SK-N-SH (cell line): ENCODE measurements at regions of chr19 and their contacts with region 1.

Region 1: DNA sequence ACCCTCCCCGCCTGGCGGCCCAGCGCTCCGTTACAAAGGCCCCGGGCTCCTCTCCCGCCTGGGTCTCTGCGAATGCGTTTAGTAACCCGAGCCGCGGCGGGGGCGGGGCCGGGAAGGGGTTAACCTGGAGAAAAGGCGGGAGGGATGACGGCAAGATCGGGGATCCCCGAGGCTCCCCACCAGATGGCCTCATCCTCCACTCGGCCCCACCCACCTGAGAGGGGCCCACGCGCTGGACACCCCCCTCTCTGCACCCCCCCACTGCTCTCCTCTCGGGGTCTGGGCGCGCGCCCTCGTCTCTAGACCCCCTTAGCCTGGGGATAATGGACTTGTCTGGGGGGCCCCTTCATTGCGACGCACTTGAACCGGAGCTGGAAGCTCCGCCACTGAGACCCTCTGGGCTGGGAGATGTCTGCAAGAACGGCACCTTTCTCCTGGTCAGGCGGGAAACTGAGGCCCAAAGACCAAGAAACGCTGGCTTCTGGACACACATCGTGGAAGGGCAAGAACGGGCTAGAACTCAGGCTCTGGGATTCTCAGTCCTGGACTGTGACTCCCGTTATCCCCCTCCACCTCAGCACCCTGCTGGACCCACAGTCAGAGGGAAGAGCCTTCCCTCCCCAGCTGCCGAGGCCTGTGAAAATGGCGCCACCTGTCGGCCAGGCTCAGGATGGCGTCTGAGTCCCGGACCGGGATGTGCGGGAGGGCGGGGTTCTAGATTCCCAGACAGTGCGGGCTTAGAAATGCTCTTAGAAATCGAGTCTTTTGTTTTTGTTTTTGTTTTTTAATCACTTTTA is 2.9 kb upstream of the LTBP4 start:
- DNase-seq: peak; percentile 94
- H3K4me3 ChIP-seq: peak overlapping the region; percentile 39 to 62
- H3K27ac ChIP-seq: peak overlapping the region in 1 of 2 experiments; percentile 38; a peak in 2 of 4 replicates
- H3K4me1 ChIP-seq: peaks cover 0 to 30% of the 10 kb centered on the region in 2 experiments; a peak in 2 of 4 replicates
- H3K27me3 ChIP-seq: no peaks in the 10 kb centered on the region
- CTCF ChIP-seq: peak; percentile 97
- EP300 ChIP-seq: no peak
- RAD21 ChIP-seq: peak; percentile 95

Region 2: GRCh38 chr19:40465557-40466150 is 132.7 kb before region 1 on chr19 and contains the start of gene BLVRB:
- CTCF ChIA-PET with region 1: interaction called, 25 read pairs
- POLR2A ChIA-PET with region 1: no interaction called
- DNase-seq: peak; percentile 97
- H3K4me3 ChIP-seq: peak within 1 kb of the TSS; percentile 61 to 79
- H3K27ac ChIP-seq: peak within 1 kb of the TSS; percentile 3 to 79; a peak in 3 of 4 replicates
- H3K4me1 ChIP-seq: peaks cover 5 to 17% of the 10 kb centered on the region in 2 experiments; a peak in 3 of 4 replicates
- H3K27me3 ChIP-seq: no peaks in the 10 kb centered on the region
- CTCF ChIP-seq: no peak
- EP300 ChIP-seq: no peak
- RAD21 ChIP-seq: no peak
- polyA plus RNA-seq, gene BLVRB: 69.7 and 85.9 TPM in 2 replicates

Region 3: DNA sequence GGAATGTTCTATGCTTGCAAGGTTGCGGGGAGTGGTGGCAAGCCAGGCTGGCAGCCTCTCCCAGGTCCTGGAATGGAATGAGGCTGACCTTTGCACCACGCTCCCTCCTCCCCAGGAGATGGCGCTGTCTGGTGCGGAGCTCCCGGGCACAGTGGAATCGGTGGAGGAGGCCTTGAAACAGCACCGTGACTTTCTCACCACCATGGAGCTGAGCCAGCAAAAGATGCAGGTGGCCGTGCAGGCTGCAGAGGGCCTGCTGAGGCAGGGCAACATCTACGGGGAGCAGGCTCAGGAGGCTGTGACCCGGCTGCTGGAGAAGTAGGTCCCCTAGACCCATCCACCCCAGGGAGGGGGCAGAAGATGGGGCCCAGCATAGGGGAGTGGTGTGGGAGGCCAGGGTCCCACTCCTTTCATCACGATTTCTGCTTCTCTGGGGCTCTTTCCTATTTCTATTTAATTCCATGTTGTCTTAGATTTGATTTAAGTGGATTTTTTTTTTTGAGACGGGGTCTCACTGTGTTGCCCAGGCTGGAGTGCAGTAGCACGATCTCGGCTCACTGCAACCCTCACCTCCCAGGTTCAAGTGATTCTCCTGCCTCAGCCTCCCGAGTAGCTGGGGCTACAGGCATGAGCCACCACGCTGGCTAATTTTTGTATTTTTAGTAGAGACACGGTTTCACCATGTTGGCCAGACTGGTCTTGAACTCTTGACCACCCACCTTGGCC is 74.8 kb before region 1 on chr19:
- CTCF ChIA-PET with region 1: interaction called, 11 read pairs
- POLR2A ChIA-PET with region 1: no interaction called
- DNase-seq: peak; percentile 83
- H3K4me3 ChIP-seq: no peak overlapping the region
- H3K27ac ChIP-seq: no peak overlapping the region
- H3K4me1 ChIP-seq: no peaks in the 10 kb centered on the region; a peak in 1 of 4 replicates
- H3K27me3 ChIP-seq: no peaks in the 10 kb centered on the region
- CTCF ChIP-seq: peak; percentile 74
- EP300 ChIP-seq: no peak
- RAD21 ChIP-seq: peak; percentile 63

Region 4: DNA sequence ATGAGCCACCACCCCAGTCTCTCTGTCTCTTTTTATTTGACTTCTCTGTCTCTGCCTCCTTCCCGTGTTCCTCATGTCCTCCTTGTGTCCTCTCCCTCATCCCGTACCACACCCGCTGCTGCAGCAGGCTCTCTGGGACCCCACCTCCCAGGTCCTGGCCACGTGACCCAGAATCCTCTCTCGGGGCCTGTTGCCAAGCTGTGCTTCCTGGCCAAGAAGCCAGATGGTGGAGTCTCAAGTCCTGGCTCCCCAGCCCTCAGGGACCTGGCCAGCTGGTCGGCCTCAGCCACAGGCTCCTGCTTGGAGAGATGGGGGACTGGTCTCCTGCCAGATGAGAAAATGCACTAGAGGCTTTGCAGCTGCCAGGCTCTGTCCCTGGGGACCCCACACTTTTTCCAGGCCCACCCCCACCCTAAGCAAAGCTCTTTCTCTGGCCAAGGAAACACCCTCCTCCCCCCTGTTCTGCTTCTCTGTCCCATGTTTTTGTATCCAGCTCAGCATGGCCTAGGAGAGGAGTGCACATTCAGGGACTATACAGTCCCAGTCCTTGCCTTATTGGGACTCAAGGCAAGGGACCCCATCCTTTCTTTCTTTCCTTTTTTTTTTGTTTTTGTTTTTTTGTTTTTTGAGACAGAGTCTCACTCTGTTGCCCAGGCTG is 56.0 kb before region 1 on chr19:
- CTCF ChIA-PET with region 1: interaction called, 24 read pairs
- POLR2A ChIA-PET with region 1: interaction called, 3 read pairs
- DNase-seq: peak; percentile 60
- H3K4me3 ChIP-seq: no peak overlapping the region
- H3K27ac ChIP-seq: peak overlapping the region in 1 of 2 experiments; percentile 19; a peak in 1 of 4 replicates
- H3K4me1 ChIP-seq: peaks cover 0 to 13% of the 10 kb centered on the region in 2 experiments; a peak in 1 of 4 replicates
- H3K27me3 ChIP-seq: no peaks in the 10 kb centered on the region
- CTCF ChIP-seq: no peak
- EP300 ChIP-seq: no peak
- RAD21 ChIP-seq: no peak

Region 5: DNA sequence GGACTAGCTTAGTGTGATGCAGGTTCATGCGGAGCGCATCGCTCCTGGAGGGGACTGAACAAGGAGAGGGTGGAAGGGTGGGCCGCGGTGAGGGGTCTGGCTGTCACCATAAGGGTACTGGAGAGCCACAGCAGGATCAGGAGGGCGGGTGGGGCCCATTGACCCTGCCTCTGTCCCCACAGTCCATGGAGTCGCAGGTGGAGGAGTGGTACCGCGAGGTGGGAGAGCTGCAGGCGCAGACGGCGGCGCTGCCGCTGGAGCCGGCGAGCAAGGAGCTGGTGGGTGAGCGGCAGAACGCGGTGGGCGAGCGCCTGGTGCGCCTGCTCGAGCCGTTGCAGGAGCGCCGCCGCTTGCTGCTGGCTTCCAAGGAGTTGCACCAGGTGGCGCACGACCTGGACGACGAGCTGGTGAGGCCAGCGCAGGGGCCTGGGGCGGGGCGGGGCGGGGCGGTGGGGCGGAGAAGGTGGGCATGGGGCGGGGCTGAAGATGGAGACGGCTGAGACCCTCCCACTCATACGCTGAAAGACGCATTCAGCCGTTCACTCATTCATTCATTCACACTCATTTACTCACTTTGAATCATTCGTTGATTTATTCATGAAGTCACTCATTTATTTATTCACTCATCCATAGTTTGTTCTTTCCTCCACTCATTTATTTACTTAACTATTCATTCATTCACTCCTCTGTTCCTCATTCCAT is 49.2 kb before region 1 on chr19:
- CTCF ChIA-PET with region 1: interaction called, 23 read pairs
- POLR2A ChIA-PET with region 1: no interaction called
- DNase-seq: peak; percentile 95
- H3K4me3 ChIP-seq: peak overlapping the region in 1 of 2 experiments; percentile 10; a peak in 2 of 4 replicates
- H3K27ac ChIP-seq: no peak overlapping the region
- H3K4me1 ChIP-seq: peaks cover 3 to 4% of the 10 kb centered on the region in 2 experiments; a peak in 1 of 4 replicates
- H3K27me3 ChIP-seq: no peaks in the 10 kb centered on the region
- CTCF ChIP-seq: peak; percentile 40
- EP300 ChIP-seq: no peak
- RAD21 ChIP-seq: peak; percentile 50

Region 6: GRCh38 chr19:40570313-40571004 is 27.9 kb before region 1 on chr19:
- CTCF ChIA-PET with region 1: interaction called, 11 read pairs
- POLR2A ChIA-PET with region 1: interaction called, 6 read pairs
- DNase-seq: peak; percentile 98
- H3K4me3 ChIP-seq: peak overlapping the region; percentile 58 to 76
- H3K27ac ChIP-seq: peak overlapping the region; percentile 51 to 87; a peak in 3 of 4 replicates
- H3K4me1 ChIP-seq: peaks cover 0 to 9% of the 10 kb centered on the region in 2 experiments; a peak in 1 of 4 replicates
- H3K27me3 ChIP-seq: no peaks in the 10 kb centered on the region
- CTCF ChIP-seq: no peak
- EP300 ChIP-seq: no peak
- RAD21 ChIP-seq: no peak